Activated CD4-positive, alpha-beta T cell treated with anti-CD3 and anti-CD28 coated beads for 36 hours (primary cell): ENCODE measurements at regions of chr15 and their contacts with region 1.

Region 1: DNA sequence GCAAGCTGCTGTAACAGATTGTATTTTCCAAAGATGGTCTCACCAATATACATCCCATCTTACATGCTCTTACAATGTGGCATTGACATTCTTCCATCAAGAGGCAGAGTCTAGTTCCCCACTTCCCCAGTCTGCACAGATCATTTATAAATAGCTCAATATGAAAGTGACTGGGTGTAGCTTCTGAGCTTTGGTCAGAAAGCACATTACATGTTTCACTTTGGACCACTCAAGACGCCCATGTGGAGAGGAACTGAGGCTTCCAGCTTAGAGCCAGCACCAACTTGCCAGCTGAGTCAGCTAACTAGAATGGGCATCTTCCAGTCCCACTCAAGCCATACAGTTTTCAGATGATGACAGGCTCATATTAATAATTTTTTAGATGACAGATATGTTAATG is 45.5 kb downstream of the GREM1 start:
- DNase-seq: no peak
- ATAC-seq: no peak
- H3K4me3 Mint-ChIP-seq: no peak overlapping the region
- H3K27ac Mint-ChIP-seq: no peak overlapping the region
- H3K4me1 Mint-ChIP-seq: no peaks in the 10 kb centered on the region
- H3K27me3 Mint-ChIP-seq: peaks cover 16% of the 10 kb centered on the region

Region 2: DNA sequence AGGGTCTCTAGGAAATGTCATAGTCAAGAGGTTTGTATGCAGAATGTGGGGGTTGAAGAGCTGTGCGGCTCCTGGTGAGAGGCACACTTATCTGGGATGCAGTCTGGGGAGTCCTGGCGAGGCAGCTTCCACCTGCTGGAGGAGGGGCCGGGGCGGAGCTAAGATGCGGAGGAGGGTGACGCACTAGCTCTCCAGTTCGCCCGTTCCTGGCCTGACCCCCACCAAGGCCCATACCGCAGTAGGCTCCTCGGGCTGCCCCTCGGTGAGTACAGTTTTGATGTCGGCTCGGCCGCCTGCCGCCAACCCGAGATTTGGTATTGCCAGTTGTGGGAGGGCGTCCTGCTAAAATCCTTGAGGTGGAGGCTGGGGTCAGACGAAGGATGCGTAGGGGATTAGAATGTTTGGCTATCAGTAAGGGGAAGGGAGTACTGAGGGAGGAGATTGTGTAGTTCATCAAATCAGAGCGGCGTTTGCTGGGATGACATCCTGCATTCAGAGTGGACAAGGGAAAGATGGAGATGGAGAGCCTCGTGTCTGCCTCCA is 121.7 kb before region 1 on chr15 and contains the start of gene SCG5:
- CTCF ChIA-PET with region 1: no interaction called
- POLR2A ChIA-PET with region 1: no interaction called
- intact Hi-C with region 1: no loop called
- DNase-seq: peak; percentile 19
- ATAC-seq: peak; percentile 23
- H3K4me3 Mint-ChIP-seq: no peak within 1 kb of the TSS
- H3K27ac Mint-ChIP-seq: no peak within 1 kb of the TSS
- H3K4me1 Mint-ChIP-seq: no peaks in the 10 kb centered on the region
- H3K27me3 Mint-ChIP-seq: no peaks in the 10 kb centered on the region
- total RNA-seq, gene SCG5: 0.91 to 1.2 TPM

Region 3: GRCh38 chr15:32709295-32710033 is 53.8 kb before region 1 on chr15:
- CTCF ChIA-PET with region 1: no interaction called
- POLR2A ChIA-PET with region 1: no interaction called
- intact Hi-C with region 1: loop called in 1 of 2 experiments (anchors 5 kb)
- DNase-seq: no peak
- ATAC-seq: no peak
- H3K4me3 Mint-ChIP-seq: no peak overlapping the region
- H3K27ac Mint-ChIP-seq: no peak overlapping the region
- H3K4me1 Mint-ChIP-seq: no peaks in the 10 kb centered on the region
- H3K27me3 Mint-ChIP-seq: peaks cover 28% of the 10 kb centered on the region

Region 4: GRCh38 chr15:32803631-32804030 is 40.3 kb after region 1 on chr15:
- CTCF ChIA-PET with region 1: no interaction called
- POLR2A ChIA-PET with region 1: no interaction called
- intact Hi-C with region 1: loop called in 1 of 2 experiments (anchors 2 kb)
- DNase-seq: no peak
- ATAC-seq: no peak
- H3K4me3 Mint-ChIP-seq: no peak overlapping the region
- H3K27ac Mint-ChIP-seq: no peak overlapping the region
- H3K4me1 Mint-ChIP-seq: peaks cover 4% of the 10 kb centered on the region
- H3K27me3 Mint-ChIP-seq: no peaks in the 10 kb centered on the region